ENCODE measurements at regions of chr3 and their contacts with region 1.

Region 1: DNA sequence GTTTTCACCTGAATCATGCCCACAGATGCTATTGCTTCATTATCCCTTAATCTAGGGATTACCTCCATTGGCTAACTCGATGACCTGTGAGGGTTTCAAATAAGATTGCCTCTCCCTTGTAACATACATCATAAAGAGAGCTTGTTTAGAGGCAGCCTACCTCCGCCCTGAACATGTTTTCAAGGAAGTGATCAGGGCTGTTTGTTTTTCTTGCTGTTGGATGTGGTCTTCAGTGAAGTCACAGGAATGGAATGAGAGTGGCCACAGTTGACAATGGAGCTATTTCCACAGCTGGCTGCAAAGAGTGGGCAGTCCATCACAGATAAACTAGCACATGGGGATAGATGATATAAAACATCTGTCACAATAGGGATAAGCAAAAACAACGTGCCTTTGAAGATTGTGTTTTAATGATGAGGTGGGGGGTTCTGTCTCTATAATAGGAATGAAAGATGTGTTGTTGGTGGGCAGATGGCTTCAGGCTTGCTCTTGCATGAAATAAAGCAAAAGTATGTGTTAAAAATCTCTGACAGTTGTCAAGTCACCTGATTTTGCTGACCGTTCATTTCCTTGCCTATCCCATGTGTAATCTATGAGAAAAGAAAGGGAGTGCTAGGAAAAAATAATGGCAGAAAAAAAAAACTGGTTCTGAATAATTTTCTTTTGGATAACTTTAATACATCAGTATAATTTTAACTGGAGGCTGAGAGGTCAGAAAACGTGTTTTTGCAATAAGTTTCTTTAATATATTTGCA is 642.3 kb downstream of the RBMS3 start:
- DNase-seq: peak; percentile 81
- ATAC-seq: peak; percentile 98
- H3K4me3 ChIP-seq: no peak overlapping the region
- H3K27ac ChIP-seq: peak overlapping the region; percentile 52; the same call in 1 of the 2 replicates
- H3K4me1 ChIP-seq: peaks cover 13% of the 10 kb centered on the region
- H3K27me3 ChIP-seq: no peaks in the 10 kb centered on the region
- CTCF ChIP-seq: no peak

Region 2: GRCh38 chr3:29718661-29719065 is 204.5 kb before region 1 on chr3:
- CTCF ChIA-PET with region 1: no interaction called
- POLR2A ChIA-PET with region 1: no interaction called
- intact Hi-C with region 1: no loop called
- DNase-seq: peak; percentile 65
- ATAC-seq: peak; percentile 82
- H3K4me3 ChIP-seq: no peak overlapping the region
- H3K27ac ChIP-seq: peak overlapping the region; percentile 39
- H3K4me1 ChIP-seq: peaks cover 15% of the 10 kb centered on the region
- H3K27me3 ChIP-seq: no peaks in the 10 kb centered on the region
- CTCF ChIP-seq: no peak

Region 3: GRCh38 chr3:29802057-29802456 is 121.1 kb before region 1 on chr3:
- CTCF ChIA-PET with region 1: no interaction called
- POLR2A ChIA-PET with region 1: no interaction called
- intact Hi-C with region 1: loop called (anchors 5 kb)
- DNase-seq: peak; percentile 74
- ATAC-seq: peak; percentile 94
- H3K4me3 ChIP-seq: no peak overlapping the region
- H3K27ac ChIP-seq: no peak overlapping the region
- H3K4me1 ChIP-seq: peaks cover 11% of the 10 kb centered on the region
- H3K27me3 ChIP-seq: no peaks in the 10 kb centered on the region
- CTCF ChIP-seq: no peak